ENCODE measurements at regions of chr4 and their contacts with region 1.

Region 1: DNA sequence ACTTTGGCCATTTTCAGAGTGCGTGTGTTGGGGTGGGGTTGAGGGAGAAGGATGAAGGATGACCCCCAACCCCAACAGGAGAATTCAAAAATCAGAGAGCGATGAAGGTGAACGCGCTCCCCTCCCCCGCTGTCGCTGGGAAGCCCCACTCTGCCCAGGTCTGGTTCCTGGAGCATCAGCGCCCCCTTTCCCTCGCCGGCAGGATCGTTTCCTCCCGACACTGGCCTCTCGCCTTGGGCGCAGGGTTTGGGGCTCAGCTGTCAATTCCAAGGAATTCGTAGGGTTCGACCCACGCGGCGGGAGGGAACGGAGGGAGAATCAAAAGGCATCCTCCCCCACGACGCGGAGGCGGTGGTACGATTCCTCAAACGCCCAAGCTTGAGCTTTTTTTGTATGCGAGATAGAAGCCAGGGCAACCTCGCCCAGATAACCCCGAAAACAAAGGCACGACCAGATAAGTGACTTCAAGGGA is 1.0 kb upstream of the PDGFRA start:
- DNase-seq: peak; percentile 33 to 82 (median 60)
- ATAC-seq: peak; percentile 45 to 75 (median 68)
- H3K4me3 ChIP-seq: peak overlapping the region in 2 of 4 donors; percentile 10 to 36
- H3K27ac ChIP-seq: peak overlapping the region in 2 of 4 donors; percentile 12 to 27
- H3K4me1 ChIP-seq: peaks cover 0 to 27% (median 3%) of the 10 kb centered on the region in 3 donors
- H3K27me3 ChIP-seq: peaks cover 6 to 74% (median 20%) of the 10 kb centered on the region in 4 donors
- CTCF ChIP-seq: peak; percentile 17 to 62 (median 49)

Region 2: GRCh38 chr4:53861856-53862610 is 366.1 kb before region 1 on chr4:
- intact Hi-C with region 1: no loop called
- DNase-seq: no peak
- ATAC-seq: peak in 3 of 4 donors; percentile 34 to 63 (median 41)
- H3K4me3 ChIP-seq: no peak overlapping the region
- H3K27ac ChIP-seq: no peak overlapping the region
- H3K4me1 ChIP-seq: no peaks in the 10 kb centered on the region
- H3K27me3 ChIP-seq: no peaks in the 10 kb centered on the region
- CTCF ChIP-seq: no peak

Region 3: DNA sequence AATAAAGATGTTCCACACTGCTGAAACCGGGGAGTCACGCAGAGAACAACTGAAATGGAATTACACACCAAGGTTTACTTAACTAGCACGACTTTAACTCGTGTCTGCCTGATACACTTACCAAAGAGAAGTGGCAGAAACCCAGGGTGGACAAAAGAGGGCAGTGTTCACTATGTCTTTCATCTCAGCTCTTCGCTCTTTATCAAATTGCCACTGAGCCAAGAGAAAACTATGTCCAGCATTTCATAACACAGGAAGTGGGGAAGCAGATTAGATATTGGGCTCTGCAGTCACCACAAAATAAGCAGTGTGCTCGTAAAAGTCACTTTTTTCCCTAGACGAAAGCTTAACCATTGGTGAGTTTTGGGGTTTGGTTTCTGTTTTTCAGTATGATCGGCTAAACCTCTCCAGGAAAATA is 319.4 kb before region 1 on chr4:
- intact Hi-C with region 1: loop called in 2 of 3 experiments (anchors 5 kb)
- DNase-seq: peak in 3 of 6 donors; percentile 43 to 58 (median 50)
- ATAC-seq: peak; percentile 91 to 99 (median 98)
- H3K4me3 ChIP-seq: no peak overlapping the region
- H3K27ac ChIP-seq: peak overlapping the region in 1 of 4 donors; percentile 10
- H3K4me1 ChIP-seq: peaks cover 4 to 14% (median 13%) of the 10 kb centered on the region in 3 donors
- H3K27me3 ChIP-seq: peaks cover 0 to 5% (median 0%) of the 10 kb centered on the region in 4 donors
- CTCF ChIP-seq: peak; percentile 21 to 53 (median 25)

Region 4: GRCh38 chr4:53914313-53915016 is 313.6 kb before region 1 on chr4:
- intact Hi-C with region 1: loop called in 2 of 3 experiments (anchors 5 kb)
- DNase-seq: no peak
- ATAC-seq: peak in 2 of 4 donors; percentile 34 to 39
- H3K4me3 ChIP-seq: no peak overlapping the region
- H3K27ac ChIP-seq: no peak overlapping the region
- H3K4me1 ChIP-seq: no peaks in the 10 kb centered on the region
- H3K27me3 ChIP-seq: no peaks in the 10 kb centered on the region
- CTCF ChIP-seq: no peak

Measured in pancreas (tissue), 10 donors.